Activated CD8-positive, alpha-beta T cell treated with anti-CD3 and anti-CD28 coated beads for 36 hours (primary cell): ENCODE measurements at regions of chr11 and their contacts with region 1.

Region 1: GRCh38 chr11:48109046-48109666 is 107.5 kb upstream of the OR4B1 start:
- DNase-seq: no peak
- ATAC-seq: peak; percentile 22
- H3K4me3 Mint-ChIP-seq: peak overlapping the region; percentile 59
- H3K27ac Mint-ChIP-seq: peak overlapping the region; percentile 95
- H3K4me1 Mint-ChIP-seq: peaks cover 46% of the 10 kb centered on the region
- H3K27me3 Mint-ChIP-seq: no peaks in the 10 kb centered on the region
- CTCF ChIP-seq: no peak

Region 2: DNA sequence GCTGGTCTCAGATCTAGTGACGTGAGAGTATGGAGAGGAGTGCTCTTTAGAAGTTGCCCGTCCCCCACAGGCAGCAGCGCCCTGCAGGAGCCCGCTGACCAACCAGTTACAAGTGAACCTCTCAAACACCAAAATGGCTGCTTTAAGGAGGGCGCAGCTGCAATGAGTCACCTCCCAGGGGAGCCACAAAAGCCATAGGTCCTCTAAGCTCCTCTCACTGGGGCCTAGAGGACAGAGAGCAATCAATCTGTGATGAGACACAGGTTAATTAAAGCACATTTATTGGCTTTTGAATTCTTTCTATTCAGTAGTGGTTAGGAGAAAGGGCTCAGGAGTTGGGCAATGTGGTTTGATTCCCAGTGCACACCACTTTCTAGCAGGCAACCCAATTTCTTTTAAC is 644.7 kb before region 1 on chr11:
- CTCF ChIA-PET with region 1: no interaction called
- POLR2A ChIA-PET with region 1: no interaction called
- intact Hi-C with region 1: no loop called
- DNase-seq: peak; percentile 12
- ATAC-seq: peak; percentile 30
- H3K4me3 Mint-ChIP-seq: no peak overlapping the region
- H3K27ac Mint-ChIP-seq: peak overlapping the region; percentile 55
- H3K4me1 Mint-ChIP-seq: peaks cover 6% of the 10 kb centered on the region
- H3K27me3 Mint-ChIP-seq: no peaks in the 10 kb centered on the region
- CTCF ChIP-seq: no peak

Region 3: DNA sequence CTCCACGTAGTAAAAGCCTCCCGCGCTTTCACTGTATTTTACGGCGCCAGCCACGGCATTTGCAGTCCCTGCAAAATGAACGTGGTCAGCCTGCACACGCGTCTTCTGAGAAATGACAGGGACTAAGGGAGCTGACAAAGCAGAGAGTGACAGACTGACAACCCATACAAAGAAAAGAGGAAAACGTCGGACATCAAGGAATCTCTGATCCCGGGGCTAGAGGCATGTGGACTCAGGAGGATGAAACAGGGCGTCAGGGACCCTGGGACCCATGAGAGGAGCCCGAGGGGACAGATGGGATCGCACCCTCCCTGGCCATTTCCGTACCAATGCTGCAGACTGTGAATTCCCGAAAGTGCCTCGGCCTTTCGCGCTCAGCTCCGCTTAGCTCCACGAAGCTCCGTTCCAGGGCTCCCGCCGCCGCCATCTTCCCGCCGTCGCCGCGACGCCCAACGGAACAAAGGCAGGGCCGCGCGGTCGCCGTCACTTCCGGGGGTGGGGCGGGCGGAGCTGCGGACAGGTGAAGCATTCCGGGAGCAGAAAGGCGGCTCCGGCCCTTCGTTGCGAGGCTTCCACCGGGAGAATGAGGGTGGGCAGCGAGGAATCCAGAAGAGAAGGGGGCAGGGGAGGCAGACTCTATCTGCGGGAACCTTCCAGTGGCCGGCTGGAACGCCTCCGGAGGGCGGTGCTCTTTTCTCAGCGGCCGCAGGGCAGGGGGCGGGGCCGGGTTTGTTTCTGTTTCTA is 261.1 kb before region 1 on chr11 and contains the start of gene NUP160:
- CTCF ChIA-PET with region 1: interaction called, 7 read pairs
- POLR2A ChIA-PET with region 1: no interaction called
- intact Hi-C with region 1: loop called (anchors 5 kb)
- DNase-seq: peak; percentile 92
- ATAC-seq: peak; percentile 88
- H3K4me3 Mint-ChIP-seq: peak within 1 kb of the TSS; percentile 98
- H3K27ac Mint-ChIP-seq: peak within 1 kb of the TSS; percentile 99
- H3K4me1 Mint-ChIP-seq: peaks cover 33% of the 10 kb centered on the region
- H3K27me3 Mint-ChIP-seq: no peaks in the 10 kb centered on the region
- CTCF ChIP-seq: no peak
- total RNA-seq, gene NUP160: 76.4 to 77.0 TPM

Region 4: DNA sequence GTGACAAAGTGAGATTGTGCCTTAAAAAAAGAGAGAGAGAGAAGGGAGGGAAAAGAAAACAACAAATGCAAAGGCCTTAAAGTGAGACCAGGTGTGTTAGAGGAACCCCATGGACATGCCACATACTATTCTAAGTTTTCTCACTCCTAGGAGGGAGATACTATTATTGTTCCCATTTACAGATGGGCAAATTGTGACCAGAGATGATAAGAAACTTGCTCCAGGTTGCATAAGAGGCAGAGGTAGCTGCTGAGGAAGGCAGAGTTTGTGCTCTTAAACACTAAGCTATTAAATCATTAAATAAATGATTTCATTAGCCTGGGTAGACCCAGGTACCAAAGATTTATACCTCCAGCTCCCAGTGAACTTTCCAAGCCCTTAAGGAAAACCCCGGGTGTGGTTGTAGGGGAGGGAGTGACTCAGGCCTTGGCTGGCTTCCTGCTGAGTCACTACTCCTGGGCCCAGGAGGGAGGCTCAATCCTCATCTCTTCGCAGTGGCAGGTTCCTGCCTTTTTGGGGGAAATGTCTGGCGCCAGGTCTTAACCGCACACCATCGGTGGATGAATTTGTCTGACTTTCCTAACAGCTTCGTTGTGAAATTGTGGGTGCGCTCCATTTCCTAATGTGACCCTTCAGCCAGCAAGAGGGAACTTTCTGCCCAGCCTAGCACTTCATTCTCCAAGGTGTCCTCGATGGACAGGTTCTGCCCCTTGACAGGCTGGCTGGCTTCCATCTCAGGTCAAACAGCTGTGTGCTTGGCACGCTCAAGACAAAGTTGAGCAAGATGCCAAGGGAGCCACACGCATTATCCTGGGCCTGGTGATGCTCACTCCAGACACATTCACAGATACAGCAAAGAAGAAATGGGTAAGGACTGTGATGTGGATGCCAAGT is 162.2 kb before region 1 on chr11:
- CTCF ChIA-PET with region 1: interaction called, 14 read pairs
- POLR2A ChIA-PET with region 1: interaction called, 3 read pairs
- intact Hi-C with region 1: no loop called
- DNase-seq: peak; percentile 49
- ATAC-seq: peak; percentile 28
- H3K4me3 Mint-ChIP-seq: no peak overlapping the region
- H3K27ac Mint-ChIP-seq: peak overlapping the region; percentile 7
- H3K4me1 Mint-ChIP-seq: peaks cover 33% of the 10 kb centered on the region
- H3K27me3 Mint-ChIP-seq: no peaks in the 10 kb centered on the region
- CTCF ChIP-seq: no peak

Region 5: GRCh38 chr11:48001438-48002021 is 107.6 kb before region 1 on chr11:
- CTCF ChIA-PET with region 1: interaction called, 23 read pairs
- POLR2A ChIA-PET with region 1: interaction called, 5 read pairs
- intact Hi-C with region 1: loop called (anchors 1 kb)
- DNase-seq: peak; percentile 93
- ATAC-seq: peak; percentile 86
- H3K4me3 Mint-ChIP-seq: peak overlapping the region; percentile 55
- H3K27ac Mint-ChIP-seq: peak overlapping the region; percentile 99
- H3K4me1 Mint-ChIP-seq: peaks cover 78% of the 10 kb centered on the region
- H3K27me3 Mint-ChIP-seq: no peaks in the 10 kb centered on the region
- CTCF ChIP-seq: no peak

Region 6: GRCh38 chr11:48055292-48056132 is 53.6 kb before region 1 on chr11:
- CTCF ChIA-PET with region 1: interaction called, 10 read pairs
- POLR2A ChIA-PET with region 1: interaction called, 13 read pairs
- intact Hi-C with region 1: no loop called
- DNase-seq: peak; percentile 84
- ATAC-seq: peak; percentile 93
- H3K4me3 Mint-ChIP-seq: peak overlapping the region; percentile 51
- H3K27ac Mint-ChIP-seq: peak overlapping the region; percentile 87
- H3K4me1 Mint-ChIP-seq: peaks cover 70% of the 10 kb centered on the region
- H3K27me3 Mint-ChIP-seq: no peaks in the 10 kb centered on the region
- CTCF ChIP-seq: no peak

Region 7: DNA sequence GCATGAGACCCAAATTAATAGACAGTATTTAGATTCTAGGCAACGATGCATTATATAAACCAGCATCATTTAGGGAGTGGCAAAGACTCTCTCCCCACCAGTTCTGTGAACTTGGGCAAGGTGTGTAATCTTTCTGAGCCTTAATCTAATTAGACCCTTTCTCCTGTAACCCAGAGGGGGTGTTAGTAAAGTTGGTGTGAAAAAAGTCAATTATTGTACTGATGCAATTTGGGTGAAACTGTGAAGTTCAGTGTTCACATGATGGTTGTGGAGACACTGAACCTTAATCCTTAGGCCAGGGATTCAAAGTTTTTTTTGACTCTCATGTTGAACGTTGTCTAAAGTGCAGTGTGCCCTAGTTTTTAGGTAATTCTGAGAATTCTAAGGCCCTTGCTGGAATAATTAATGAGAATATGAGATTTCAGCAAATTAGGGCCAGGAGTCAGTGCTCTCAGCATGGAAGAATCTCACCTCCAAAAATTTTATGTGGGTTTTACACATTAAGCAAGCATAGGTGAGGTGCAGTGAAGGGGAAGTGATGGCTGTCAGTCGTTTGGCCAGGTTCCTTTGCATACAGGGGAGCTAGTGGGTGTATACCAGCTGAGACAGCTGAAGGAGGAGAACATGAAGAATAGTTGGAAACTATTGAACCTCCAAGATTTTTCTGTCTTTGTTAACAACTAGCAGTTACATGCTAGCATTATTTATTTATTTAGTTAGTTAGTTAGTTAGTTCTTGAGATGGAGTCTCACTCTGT is 34.6 kb before region 1 on chr11:
- CTCF ChIA-PET with region 1: no interaction called
- POLR2A ChIA-PET with region 1: no interaction called
- intact Hi-C with region 1: no loop called
- DNase-seq: no peak
- ATAC-seq: no peak
- H3K4me3 Mint-ChIP-seq: no peak overlapping the region
- H3K27ac Mint-ChIP-seq: no peak overlapping the region
- H3K4me1 Mint-ChIP-seq: peaks cover 18% of the 10 kb centered on the region
- H3K27me3 Mint-ChIP-seq: no peaks in the 10 kb centered on the region
- CTCF ChIP-seq: no peak